SK-N-SH (cell line): ENCODE measurements at regions of chr20 and their contacts with region 1.

Region 1: GRCh38 chr20:45812157-45813020 is at the start of gene UBE2C:
- DNase-seq: peak; percentile 98
- H3K4me3 ChIP-seq: peak within 1 kb of the TSS; percentile 78 to 80
- H3K27ac ChIP-seq: peak within 1 kb of the TSS; percentile 56 to 63
- H3K4me1 ChIP-seq: peaks cover 0 to 11% of the 10 kb centered on the region in 2 experiments; a peak in 1 of 4 replicates
- H3K27me3 ChIP-seq: no peaks in the 10 kb centered on the region
- CTCF ChIP-seq: no peak
- EP300 ChIP-seq: no peak
- RAD21 ChIP-seq: no peak
- polyA plus RNA-seq, gene UBE2C: 82.8 and 115 TPM in 2 replicates

Region 2: DNA sequence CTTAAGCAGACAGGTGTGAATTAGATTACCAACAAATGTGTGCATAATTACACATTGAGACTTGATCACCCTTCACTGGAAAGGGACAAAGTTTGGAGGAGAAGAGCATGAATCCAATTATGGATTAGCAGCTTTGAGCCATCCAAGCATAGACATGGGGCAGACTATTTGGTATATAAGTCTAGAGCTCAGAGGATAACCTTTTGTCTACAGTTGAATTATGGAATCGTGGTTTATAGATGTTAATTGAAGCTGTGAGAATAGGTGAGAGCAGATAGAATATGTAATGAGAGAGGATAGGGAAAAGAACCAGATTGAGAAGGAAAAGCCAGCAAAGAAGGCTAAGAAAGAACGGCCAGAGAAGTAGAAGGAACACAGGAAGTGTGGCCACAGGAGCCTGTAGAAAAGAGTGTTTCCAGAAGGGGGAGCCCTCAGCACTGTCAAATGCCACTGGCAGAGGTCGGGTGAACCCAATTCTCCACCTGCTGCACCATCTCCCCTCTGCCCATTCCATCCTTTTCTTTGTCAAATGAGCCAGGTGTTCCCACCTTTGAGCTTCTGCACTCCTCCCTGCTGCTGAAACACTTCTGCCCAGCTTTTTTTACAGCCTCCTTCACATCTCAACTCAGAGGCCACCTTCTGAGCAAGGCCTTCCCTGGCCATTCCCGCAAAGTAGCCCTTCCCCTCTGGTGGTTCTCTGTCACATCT is 13.3 kb before region 1 on chr20:
- CTCF ChIA-PET with region 1: interaction called, 19 read pairs
- POLR2A ChIA-PET with region 1: interaction called, 3 read pairs
- DNase-seq: peak; percentile 71
- H3K4me3 ChIP-seq: no peak overlapping the region
- H3K27ac ChIP-seq: peak overlapping the region in 1 of 2 experiments; percentile 1; a peak in 1 of 4 replicates
- H3K4me1 ChIP-seq: no peaks in the 10 kb centered on the region
- H3K27me3 ChIP-seq: no peaks in the 10 kb centered on the region
- CTCF ChIP-seq: peak; percentile 76
- EP300 ChIP-seq: no peak
- RAD21 ChIP-seq: peak; percentile 76